Activated B cell treated with CpG ODN at 0.5 μM for 24 hours (primary cell): ENCODE measurements at regions of chr2 and their contacts with region 1.

Region 1: GRCh38 chr2:59025157-59025757 is 784.1 kb upstream of the FANCL start:
- DNase-seq: peak; percentile 50
- ATAC-seq: peak; percentile 54
- H3K4me3 Mint-ChIP-seq: no peak overlapping the region
- H3K27ac Mint-ChIP-seq: no peak overlapping the region
- H3K4me1 Mint-ChIP-seq: peaks cover 2% of the 10 kb centered on the region
- H3K27me3 Mint-ChIP-seq: peaks cover 10% of the 10 kb centered on the region
- CTCF ChIP-seq: peak; percentile 45

Region 2: DNA sequence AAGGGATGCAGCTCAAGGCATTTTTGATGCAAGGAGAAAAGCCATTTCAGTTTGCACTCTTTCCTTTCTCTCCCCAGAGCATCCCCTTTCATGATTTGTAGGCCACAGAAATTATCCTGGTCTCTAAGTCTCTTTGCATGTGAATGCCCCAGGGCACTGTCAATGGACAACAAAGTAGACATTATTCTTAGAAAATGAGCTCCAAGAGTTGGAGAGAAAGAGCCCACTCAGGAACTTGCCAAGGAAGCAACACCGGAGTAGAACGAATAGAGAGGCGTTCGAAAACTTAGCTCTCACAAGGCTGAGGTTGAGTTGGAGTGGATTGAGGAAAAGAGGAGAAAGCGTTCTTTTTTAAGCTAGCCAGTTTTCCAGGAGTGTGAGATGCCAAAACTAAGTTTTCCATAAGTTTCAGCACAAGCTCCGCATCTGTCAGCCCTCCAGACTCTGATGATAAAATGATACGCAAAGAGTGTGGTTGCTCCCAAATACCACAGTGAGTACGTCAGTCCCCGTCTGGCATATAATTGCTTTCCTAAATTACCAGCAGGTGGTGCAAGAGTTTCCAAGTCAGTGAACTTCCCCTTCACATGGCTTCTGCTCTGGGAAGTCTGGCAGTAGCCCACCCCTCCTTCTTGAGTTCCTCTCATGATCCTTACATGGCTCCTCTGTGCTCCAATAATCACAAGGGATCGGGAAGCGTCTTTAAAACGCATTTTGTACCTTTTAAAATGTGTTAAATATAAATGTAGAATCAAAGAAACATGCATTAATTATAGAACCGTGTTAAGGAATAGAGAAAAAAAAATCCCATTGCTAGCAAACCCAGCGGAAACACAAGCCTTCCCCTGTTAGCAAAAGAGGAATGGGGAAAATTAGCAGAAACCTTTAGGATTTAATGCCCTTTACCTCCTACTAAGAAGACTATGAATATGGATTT is 276.5 kb after region 1 on chr2:
- CTCF ChIA-PET with region 1: interaction called, 4 read pairs
- POLR2A ChIA-PET with region 1: no interaction called
- intact Hi-C with region 1: loop called (anchors 1 kb)
- DNase-seq: no peak
- ATAC-seq: peak; percentile 67
- H3K4me3 Mint-ChIP-seq: no peak overlapping the region
- H3K27ac Mint-ChIP-seq: no peak overlapping the region
- H3K4me1 Mint-ChIP-seq: no peaks in the 10 kb centered on the region
- H3K27me3 Mint-ChIP-seq: peaks cover 2% of the 10 kb centered on the region
- CTCF ChIP-seq: no peak

Region 3: GRCh38 chr2:60337140-60337494 is 1311.9 kb after region 1 on chr2:
- CTCF ChIA-PET with region 1: no interaction called
- POLR2A ChIA-PET with region 1: no interaction called
- intact Hi-C with region 1: loop called (anchors 10 kb)
- DNase-seq: no peak
- ATAC-seq: peak; percentile 80
- H3K4me3 Mint-ChIP-seq: peak overlapping the region; percentile 32
- H3K27ac Mint-ChIP-seq: peak overlapping the region; percentile 95
- H3K4me1 Mint-ChIP-seq: peaks cover 65% of the 10 kb centered on the region
- H3K27me3 Mint-ChIP-seq: no peaks in the 10 kb centered on the region
- CTCF ChIP-seq: no peak

Region 4: DNA sequence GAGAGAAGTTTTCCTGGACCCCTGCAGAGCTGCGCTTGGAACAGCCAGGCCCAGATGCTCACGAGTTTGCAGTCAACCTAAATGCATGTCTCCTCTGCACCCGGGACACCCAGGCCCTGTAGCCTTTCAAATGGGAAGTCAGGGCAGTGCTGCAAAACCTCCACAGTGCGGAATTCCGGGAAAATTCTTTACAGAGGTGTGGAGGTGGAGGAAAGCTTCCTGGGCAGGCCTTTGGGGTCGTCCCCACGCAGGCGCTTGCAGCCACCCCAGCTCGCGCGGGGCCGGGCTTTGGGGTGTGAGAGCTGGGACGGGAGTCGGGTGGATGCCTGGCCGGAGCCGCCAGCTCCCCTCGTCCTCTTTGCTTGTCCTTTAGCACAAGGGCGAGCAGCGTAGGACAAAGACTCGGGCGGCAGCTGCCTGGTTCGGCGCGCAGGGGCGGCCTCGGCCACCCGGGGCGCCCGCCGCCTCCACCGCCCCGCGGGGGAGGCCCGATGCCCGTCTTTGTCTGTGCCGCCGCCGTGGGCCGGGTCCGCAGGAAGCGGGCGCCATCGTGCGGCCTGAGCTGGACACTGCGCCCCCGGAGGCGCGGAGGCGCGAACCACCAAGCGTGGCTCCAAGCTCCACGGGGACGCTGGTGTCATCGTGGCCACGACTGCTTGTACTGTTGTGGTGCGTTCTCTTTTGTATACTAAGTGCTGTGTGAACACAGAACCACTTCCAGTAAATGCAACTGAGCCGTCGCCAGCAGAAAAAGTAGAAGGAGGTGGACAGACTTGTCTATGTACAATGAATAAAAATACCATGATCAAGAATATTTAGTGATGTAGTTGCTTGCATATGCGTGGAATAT is 1556.4 kb after region 1 on chr2:
- CTCF ChIA-PET with region 1: interaction called, 130 read pairs
- POLR2A ChIA-PET with region 1: interaction called, 7 read pairs
- intact Hi-C with region 1: loop called (anchors 1 kb)
- DNase-seq: peak; percentile 85
- ATAC-seq: peak; percentile 100
- H3K4me3 Mint-ChIP-seq: peak overlapping the region; percentile 70
- H3K27ac Mint-ChIP-seq: no peak overlapping the region
- H3K4me1 Mint-ChIP-seq: peaks cover 3% of the 10 kb centered on the region
- H3K27me3 Mint-ChIP-seq: peaks cover 10% of the 10 kb centered on the region
- CTCF ChIP-seq: peak; percentile 64

Region 5: GRCh38 chr2:60674524-60675165 is 1649.4 kb after region 1 on chr2:
- CTCF ChIA-PET with region 1: interaction called, 13 read pairs
- POLR2A ChIA-PET with region 1: no interaction called
- intact Hi-C with region 1: loop called (anchors 1 kb)
- DNase-seq: peak; percentile 77
- ATAC-seq: peak; percentile 100
- H3K4me3 Mint-ChIP-seq: no peak overlapping the region
- H3K27ac Mint-ChIP-seq: no peak overlapping the region
- H3K4me1 Mint-ChIP-seq: peaks cover 3% of the 10 kb centered on the region
- H3K27me3 Mint-ChIP-seq: peaks cover 2% of the 10 kb centered on the region
- CTCF ChIP-seq: peak; percentile 96